PC-9 (cell line): ENCODE measurements at regions of chr2 and their contacts with region 1.

Region 1: GRCh38 chr2:100228967-100229366 is 86.6 kb upstream of the AFF3 start:
- DNase-seq: no peak
- H3K4me3 ChIP-seq: no peak overlapping the region
- H3K27ac ChIP-seq: no peak overlapping the region
- H3K4me1 ChIP-seq: no peaks in the 10 kb centered on the region
- H3K27me3 ChIP-seq: peaks cover 71% of the 10 kb centered on the region
- CTCF ChIP-seq: no peak

Region 2: DNA sequence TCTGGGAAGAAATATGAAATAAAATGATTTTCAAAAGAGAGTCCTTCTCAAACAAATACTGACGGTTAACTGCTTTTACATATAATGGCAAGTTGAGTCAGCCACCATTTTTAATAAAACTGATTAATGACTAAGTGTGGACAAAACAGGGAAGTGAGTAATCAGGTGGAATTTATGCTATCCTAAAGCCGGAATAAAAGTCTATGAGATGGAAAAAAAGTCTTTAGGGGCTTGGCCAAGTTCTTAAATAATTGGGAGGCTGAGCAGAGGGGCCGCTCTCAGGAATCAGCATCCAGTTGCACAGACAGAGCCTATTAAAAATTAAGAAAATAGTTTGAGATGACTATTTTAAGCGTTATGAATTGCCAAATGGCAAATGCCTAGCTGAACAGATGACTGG is 28.0 kb before region 1 on chr2:
- CTCF ChIA-PET with region 1: no interaction called
- POLR2A ChIA-PET with region 1: no interaction called
- intact Hi-C with region 1: loop called (anchors 1 kb)
- DNase-seq: no peak
- H3K4me3 ChIP-seq: no peak overlapping the region
- H3K27ac ChIP-seq: no peak overlapping the region
- H3K4me1 ChIP-seq: no peaks in the 10 kb centered on the region
- H3K27me3 ChIP-seq: peaks cover 99% of the 10 kb centered on the region
- CTCF ChIP-seq: no peak